Adrenal gland (tissue), 19 donors: ENCODE measurements at regions of chr2 and their contacts with region 1.

Region 1: GRCh38 chr2:10434886-10435819 is 13.0 kb downstream of the ODC1 start:
- DNase-seq: peak; percentile 67 to 84 (median 73)
- H3K4me3 ChIP-seq: no peak overlapping the region
- H3K27ac ChIP-seq: no peak overlapping the region
- H3K4me1 ChIP-seq: peaks cover 0 to 7% of the 10 kb centered on the region in 2 donors
- H3K27me3 ChIP-seq: no peaks in the 10 kb centered on the region
- CTCF ChIP-seq: peak; percentile 94 to 98 (median 96)
- POLR2A ChIP-seq: no peak

Region 2: DNA sequence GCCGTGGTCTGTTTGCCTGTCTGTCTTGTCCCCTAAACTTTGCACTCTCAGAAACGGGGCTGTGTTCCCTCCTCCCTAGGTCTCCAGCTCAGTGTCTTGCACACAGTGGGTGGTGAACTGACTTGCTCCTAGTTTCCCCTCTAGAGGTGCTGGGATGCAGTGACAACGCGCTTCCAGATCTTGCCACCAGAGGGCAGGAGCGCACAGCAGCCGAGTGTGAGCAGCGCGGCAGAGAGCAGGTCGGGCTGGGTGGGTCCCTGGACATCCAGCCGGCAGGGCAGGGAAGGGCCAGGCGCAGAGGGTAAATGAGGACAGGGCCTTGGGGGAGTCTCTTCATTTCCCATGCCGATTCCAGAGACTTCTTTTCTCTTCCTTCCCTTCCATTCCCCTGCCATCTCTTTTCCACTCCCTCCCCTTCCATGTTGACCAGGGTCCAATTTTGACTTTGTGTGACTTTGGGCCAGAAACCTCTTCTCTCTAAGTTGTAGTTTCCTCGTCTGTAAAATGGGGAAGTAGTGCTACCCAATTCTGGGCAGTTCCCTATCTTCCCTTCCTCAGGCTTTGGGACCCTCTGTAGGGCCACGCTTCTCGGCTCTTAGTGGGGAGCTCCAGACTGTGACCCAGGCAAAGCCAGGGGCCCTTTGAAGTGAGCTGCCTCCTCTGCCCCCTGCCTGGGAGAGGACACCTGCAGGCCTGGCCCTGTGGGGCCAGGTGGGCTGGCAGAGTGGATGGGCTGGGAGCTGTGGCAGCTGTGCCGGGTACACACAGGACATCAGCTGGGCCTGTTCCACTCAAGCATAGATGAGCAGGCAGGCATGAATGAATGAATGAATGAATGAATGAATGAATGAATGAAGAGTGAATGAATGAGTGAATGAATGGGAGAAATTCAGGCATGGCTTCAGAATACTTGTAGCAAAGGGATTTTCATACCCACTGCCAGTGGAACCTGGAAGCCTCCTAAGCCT is 635.2 kb before region 1 on chr2:
- intact Hi-C with region 1: loop called in 1 of 2 experiments (anchors 5 kb)
- DNase-seq: peak; percentile 75 to 92 (median 82)
- H3K4me3 ChIP-seq: no peak overlapping the region
- H3K27ac ChIP-seq: no peak overlapping the region
- H3K4me1 ChIP-seq: no peaks in the 10 kb centered on the region
- H3K27me3 ChIP-seq: no peaks in the 10 kb centered on the region
- CTCF ChIP-seq: peak; percentile 90 to 97 (median 92)
- POLR2A ChIP-seq: no peak

Region 3: DNA sequence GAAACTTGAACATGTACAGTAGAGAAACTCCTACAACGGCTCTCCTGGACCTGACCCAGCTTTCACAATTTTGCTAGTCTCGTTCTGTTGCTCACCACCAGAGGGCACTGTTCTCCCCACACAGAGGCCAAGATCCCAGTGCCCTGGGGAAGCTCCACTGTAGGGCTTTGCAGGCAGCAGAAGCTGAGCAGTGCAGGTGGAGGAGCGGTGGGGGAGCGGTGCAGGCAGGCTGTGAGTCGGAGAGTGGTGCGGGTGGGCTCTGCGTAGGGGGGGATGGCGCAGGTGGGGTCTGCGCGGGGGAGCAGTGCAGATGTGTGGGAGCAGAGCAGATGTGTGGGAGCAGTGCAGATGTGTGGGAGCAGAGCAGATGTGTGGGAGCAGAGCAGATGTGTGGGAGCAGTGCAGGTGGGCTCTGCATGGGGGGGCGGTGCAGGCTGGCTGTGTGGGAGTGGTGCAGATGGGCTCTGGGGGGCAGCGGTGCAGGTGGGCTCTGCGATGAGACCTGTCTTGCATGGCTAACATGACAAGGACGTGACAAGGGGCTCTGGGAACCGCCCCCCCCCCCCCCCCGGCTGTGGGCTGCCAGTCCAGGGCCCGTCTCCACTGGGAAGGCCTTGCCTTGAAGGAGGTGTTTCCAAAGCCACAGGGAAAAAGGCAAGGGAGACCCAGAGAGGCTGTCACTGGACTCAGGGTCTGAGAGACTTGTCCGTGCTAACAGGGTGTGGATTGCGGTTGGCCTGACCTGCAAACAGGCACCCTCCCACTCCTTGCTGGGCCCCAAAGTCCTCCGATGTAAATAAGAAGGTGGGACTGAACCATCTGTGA is 362.3 kb before region 1 on chr2:
- intact Hi-C with region 1: loop called (anchors 5 kb)
- DNase-seq: peak; percentile 81 to 94 (median 88)
- H3K4me3 ChIP-seq: no peak overlapping the region
- H3K27ac ChIP-seq: no peak overlapping the region
- H3K4me1 ChIP-seq: no peaks in the 10 kb centered on the region
- H3K27me3 ChIP-seq: no peaks in the 10 kb centered on the region
- CTCF ChIP-seq: peak; percentile 80 to 93 (median 88)
- POLR2A ChIP-seq: no peak

Region 4: GRCh38 chr2:10122386-10123280 is 312.5 kb before region 1 on chr2 and contains the start of gene RRM2:
- intact Hi-C with region 1: loop called (anchors 2 to 5 kb)
- DNase-seq: peak; percentile 91 to 95 (median 94)
- H3K4me3 ChIP-seq: peak within 1 kb of the TSS in 2 of 4 donors; percentile 24 to 59
- H3K27ac ChIP-seq: no peak within 1 kb of the TSS
- H3K4me1 ChIP-seq: peaks cover 6 to 25% of the 10 kb centered on the region in 2 donors
- H3K27me3 ChIP-seq: peaks cover 11% of the 10 kb centered on the region
- CTCF ChIP-seq: no peak
- POLR2A ChIP-seq: no peak
- total RNA-seq, gene RRM2: 2.0 to 22.3 (median 4.0) TPM

Region 5: DNA sequence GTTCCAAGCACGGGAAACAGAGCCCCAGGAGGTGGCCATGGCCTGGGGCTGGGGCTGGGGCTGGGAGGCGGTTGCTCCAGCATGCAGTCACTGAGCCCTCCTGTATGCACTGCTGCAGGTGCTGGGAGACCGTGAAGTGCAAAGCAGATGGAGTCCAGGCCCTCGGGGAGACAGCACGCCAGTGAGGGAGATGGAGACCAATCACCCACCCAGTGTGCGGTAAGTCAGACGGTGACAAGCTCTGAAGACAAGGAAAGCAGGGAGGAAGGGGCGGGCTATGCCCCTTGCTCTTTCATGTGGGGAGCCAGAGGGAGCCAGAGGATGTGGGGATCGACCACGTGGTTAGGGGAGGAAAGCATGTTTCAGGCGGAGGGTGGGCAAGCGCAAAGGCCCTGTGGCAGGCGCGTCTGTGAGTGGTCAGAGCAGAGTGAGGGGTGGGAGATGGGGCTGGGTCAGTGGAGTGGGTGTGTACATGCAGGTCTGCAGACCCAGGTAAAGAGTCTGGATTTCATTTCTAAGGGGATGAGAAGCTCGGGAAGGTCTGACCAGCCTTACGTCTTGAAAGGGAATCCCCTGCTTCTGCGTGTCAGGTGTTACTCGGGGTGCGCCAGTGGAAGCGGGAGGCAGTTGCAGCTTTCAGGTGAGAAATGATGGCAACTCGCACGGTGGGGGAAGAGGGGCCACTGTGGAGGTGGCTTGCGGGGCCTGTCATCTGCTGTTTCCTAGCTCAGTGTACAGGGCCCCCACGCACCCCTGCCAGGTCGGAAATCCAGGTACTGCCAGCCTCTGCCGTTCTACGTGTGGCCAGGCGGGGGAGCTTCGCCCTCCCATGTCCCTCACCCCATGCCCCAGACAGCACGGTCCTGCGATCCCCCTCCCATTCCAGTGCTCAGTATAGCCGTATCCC is 293.2 kb before region 1 on chr2:
- intact Hi-C with region 1: loop called in 1 of 2 experiments (anchors 5 kb)
- DNase-seq: peak in 6 of 7 donors; percentile 35 to 61 (median 48)
- H3K4me3 ChIP-seq: no peak overlapping the region
- H3K27ac ChIP-seq: no peak overlapping the region
- H3K4me1 ChIP-seq: no peaks in the 10 kb centered on the region
- H3K27me3 ChIP-seq: no peaks in the 10 kb centered on the region
- CTCF ChIP-seq: peak; percentile 48 to 72 (median 68)
- POLR2A ChIP-seq: no peak

Region 6: GRCh38 chr2:10659898-10660568 is 224.9 kb after region 1 on chr2:
- intact Hi-C with region 1: loop called (anchors 10 kb)
- DNase-seq: peak; percentile 82 to 94 (median 90)
- H3K4me3 ChIP-seq: no peak overlapping the region
- H3K27ac ChIP-seq: peak overlapping the region in 1 of 5 donors; percentile 5
- H3K4me1 ChIP-seq: no peaks in the 10 kb centered on the region
- H3K27me3 ChIP-seq: no peaks in the 10 kb centered on the region
- CTCF ChIP-seq: peak; percentile 75 to 95 (median 86)
- POLR2A ChIP-seq: no peak